Activated CD4-positive, alpha-beta T cell treated with anti-CD3 and anti-CD28 coated beads for 36 hours (primary cell): ENCODE measurements at regions of chr1 and their contacts with region 1.

Region 1: DNA sequence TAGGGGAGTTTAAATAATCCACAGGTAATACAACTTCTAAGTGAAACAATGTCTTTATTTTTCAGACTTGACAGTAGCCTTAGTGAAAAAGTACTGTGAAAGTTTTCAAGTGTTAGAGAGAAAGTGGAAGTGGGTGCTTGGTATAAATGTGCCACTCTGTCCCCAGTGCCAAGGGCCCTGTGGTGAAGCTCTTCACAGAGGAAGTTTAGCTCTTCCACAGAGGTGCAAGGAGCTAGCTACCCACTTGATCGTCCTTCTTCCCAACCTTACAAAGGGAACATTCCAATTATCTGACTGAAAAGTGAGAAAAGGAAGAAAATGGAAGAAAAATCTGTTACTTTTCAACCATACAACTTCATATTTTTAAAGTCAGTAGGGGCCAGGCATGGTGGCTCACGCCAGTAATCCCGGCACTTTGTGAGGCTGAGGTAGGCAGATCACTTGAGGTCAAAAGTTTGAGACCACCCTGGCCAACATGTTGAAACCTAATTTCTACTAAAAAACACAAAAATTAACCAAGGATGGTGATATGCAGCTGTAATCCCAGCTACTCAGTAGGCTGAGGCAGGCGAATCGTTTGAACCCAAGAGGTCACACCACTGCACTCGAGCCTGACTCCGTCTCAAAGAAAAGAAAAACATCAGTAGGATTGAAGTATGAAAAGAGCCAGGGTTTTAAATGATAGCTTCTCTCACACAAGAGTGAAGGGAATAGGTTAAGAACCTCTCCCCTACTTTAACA is 41.0 kb upstream of the PTPRC start:
- DNase-seq: no peak
- ATAC-seq: no peak
- H3K4me3 Mint-ChIP-seq: peak overlapping the region; percentile 52
- H3K27ac Mint-ChIP-seq: peak overlapping the region; percentile 87
- H3K4me1 Mint-ChIP-seq: peaks cover 80% of the 10 kb centered on the region
- H3K27me3 Mint-ChIP-seq: no peaks in the 10 kb centered on the region

Region 2: DNA sequence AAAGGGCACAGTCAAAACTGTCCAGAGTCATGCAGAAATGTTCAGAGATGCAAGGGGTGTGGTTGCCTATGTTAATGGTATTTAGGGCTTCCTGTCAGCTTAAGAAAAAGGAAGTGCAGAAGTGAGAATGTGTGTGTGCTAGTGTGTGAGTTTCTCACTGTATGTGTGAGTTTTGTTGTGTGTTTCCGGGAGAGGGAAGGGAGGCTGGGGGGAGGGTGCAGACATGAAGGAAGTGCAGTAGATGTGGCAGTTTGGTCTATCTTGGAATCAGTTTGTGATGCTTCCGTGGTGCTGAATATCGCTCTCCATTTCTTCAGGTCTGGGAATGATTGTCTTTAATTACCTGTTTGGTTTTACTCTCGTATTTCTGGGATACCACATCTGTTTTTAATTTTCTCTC is 40.9 kb before region 1 on chr1:
- CTCF ChIA-PET with region 1: interaction called, 5 read pairs
- POLR2A ChIA-PET with region 1: no interaction called
- intact Hi-C with region 1: loop called in 1 of 2 experiments (anchors 5 kb)
- DNase-seq: peak; percentile 71
- ATAC-seq: peak; percentile 94
- H3K4me3 Mint-ChIP-seq: peak overlapping the region; percentile 68
- H3K27ac Mint-ChIP-seq: peak overlapping the region; percentile 82
- H3K4me1 Mint-ChIP-seq: peaks cover 76% of the 10 kb centered on the region
- H3K27me3 Mint-ChIP-seq: no peaks in the 10 kb centered on the region

Region 3: GRCh38 chr1:198564716-198565115 is 33.1 kb before region 1 on chr1:
- CTCF ChIA-PET with region 1: no interaction called
- POLR2A ChIA-PET with region 1: no interaction called
- intact Hi-C with region 1: loop called (anchors 2 to 5 kb)
- DNase-seq: no peak
- ATAC-seq: peak; percentile 53
- H3K4me3 Mint-ChIP-seq: no peak overlapping the region
- H3K27ac Mint-ChIP-seq: no peak overlapping the region
- H3K4me1 Mint-ChIP-seq: peaks cover 46% of the 10 kb centered on the region
- H3K27me3 Mint-ChIP-seq: no peaks in the 10 kb centered on the region

Region 4: DNA sequence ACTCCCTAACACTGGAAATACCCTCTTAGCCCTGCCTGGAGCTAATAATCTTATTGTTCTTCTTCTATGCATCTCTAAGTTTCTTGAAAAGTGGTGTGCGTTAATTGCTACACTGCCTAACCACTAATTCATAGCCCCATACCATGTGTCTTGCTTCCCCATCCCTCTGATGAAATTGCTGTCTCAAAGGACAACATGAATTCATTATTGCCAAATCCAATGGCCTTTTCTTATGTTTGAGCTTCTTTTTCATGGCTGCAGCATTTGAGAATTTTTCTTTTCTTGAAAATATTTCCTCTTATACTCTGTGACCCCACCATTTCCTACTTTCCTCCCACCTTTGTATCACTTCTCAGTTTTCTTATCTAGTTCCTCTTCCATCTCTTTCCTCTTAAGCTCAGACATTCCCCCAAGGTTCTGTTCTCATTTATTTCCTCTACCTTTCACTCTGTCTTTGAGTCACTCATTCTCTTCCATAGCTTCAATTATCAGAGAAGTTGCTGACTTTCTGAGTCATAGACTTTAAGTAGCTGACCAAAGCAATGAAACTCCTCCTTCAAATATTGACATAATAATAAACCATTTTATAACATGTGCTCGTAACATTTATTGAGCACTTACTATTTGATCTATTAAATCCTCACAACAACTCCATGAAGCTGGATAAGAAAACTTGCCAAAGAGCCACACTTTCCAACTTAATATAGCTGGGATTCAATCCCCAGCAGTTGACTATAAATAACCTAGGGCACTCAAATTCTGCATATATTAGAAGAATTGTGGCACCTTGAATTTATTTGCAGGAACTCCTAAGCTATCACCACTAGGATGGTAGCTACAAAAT is 21.8 kb before region 1 on chr1:
- CTCF ChIA-PET with region 1: interaction called, 3 read pairs
- POLR2A ChIA-PET with region 1: no interaction called
- intact Hi-C with region 1: loop called in 1 of 2 experiments (anchors 2 kb)
- DNase-seq: no peak
- ATAC-seq: no peak
- H3K4me3 Mint-ChIP-seq: no peak overlapping the region
- H3K27ac Mint-ChIP-seq: no peak overlapping the region
- H3K4me1 Mint-ChIP-seq: peaks cover 14% of the 10 kb centered on the region
- H3K27me3 Mint-ChIP-seq: no peaks in the 10 kb centered on the region

Region 5: DNA sequence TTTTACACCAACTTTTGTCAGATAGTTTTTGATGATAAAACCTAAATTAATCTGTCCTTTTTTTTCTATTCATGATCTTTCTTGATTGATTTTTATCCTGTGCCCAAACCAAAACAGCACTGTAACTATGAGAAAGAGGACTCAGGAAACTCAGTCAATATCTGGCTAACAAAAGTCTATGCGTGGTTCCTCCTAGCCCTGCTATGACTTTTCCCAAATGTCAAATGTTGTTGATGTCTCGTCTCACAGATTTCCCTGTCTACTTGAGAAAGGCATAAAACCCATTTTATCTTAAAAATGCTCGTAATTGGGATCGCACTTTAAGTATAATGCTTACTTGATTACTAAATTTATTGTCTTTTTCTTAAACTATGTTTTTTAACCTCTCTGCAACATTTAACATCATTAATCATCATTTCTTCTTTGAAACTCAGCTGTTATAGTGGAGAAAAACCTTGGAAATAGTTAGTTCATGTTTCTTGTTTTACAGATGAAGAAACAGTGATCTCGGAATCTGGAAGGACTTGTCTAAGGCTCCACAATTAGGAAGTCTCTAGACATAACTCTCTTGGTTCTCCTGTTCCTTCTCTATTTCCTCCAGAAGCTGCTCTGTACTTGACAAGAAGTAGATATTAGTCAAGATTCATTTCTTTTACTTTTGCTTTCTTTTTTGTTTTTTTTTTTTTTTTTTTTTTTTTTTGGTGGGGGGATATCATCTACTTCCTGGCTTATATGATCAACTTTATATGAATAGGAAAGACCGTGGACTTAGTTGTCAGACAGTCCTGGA is 14.8 kb after region 1 on chr1:
- CTCF ChIA-PET with region 1: interaction called, 6 read pairs
- POLR2A ChIA-PET with region 1: interaction called, 4 read pairs
- intact Hi-C with region 1: loop called (anchors 1 kb)
- DNase-seq: no peak
- ATAC-seq: peak; percentile 48
- H3K4me3 Mint-ChIP-seq: peak overlapping the region; percentile 77
- H3K27ac Mint-ChIP-seq: peak overlapping the region; percentile 99
- H3K4me1 Mint-ChIP-seq: peaks cover 83% of the 10 kb centered on the region
- H3K27me3 Mint-ChIP-seq: no peaks in the 10 kb centered on the region

Region 6: GRCh38 chr1:198620951-198621824 is 23.3 kb after region 1 on chr1:
- CTCF ChIA-PET with region 1: interaction called, 5 read pairs
- POLR2A ChIA-PET with region 1: no interaction called
- intact Hi-C with region 1: loop called in 1 of 2 experiments (anchors 2 kb)
- DNase-seq: peak; percentile 84
- ATAC-seq: peak; percentile 77
- H3K4me3 Mint-ChIP-seq: peak overlapping the region; percentile 76
- H3K27ac Mint-ChIP-seq: peak overlapping the region; percentile 100
- H3K4me1 Mint-ChIP-seq: peaks cover 94% of the 10 kb centered on the region
- H3K27me3 Mint-ChIP-seq: no peaks in the 10 kb centered on the region

Region 7: GRCh38 chr1:198669023-198669698 is 71.3 kb after region 1 on chr1:
- CTCF ChIA-PET with region 1: no interaction called
- POLR2A ChIA-PET with region 1: no interaction called
- intact Hi-C with region 1: no loop called
- DNase-seq: peak; percentile 57
- ATAC-seq: peak; percentile 85
- H3K4me3 Mint-ChIP-seq: peak overlapping the region; percentile 34
- H3K27ac Mint-ChIP-seq: peak overlapping the region; percentile 77
- H3K4me1 Mint-ChIP-seq: peaks cover 90% of the 10 kb centered on the region
- H3K27me3 Mint-ChIP-seq: no peaks in the 10 kb centered on the region

Region 8: GRCh38 chr1:198776602-198777029 is 178.8 kb after region 1 on chr1:
- CTCF ChIA-PET with region 1: no interaction called
- POLR2A ChIA-PET with region 1: no interaction called
- intact Hi-C with region 1: no loop called
- DNase-seq: no peak
- ATAC-seq: peak; percentile 26
- H3K4me3 Mint-ChIP-seq: no peak overlapping the region
- H3K27ac Mint-ChIP-seq: no peak overlapping the region
- H3K4me1 Mint-ChIP-seq: peaks cover 8% of the 10 kb centered on the region
- H3K27me3 Mint-ChIP-seq: no peaks in the 10 kb centered on the region

Region 9: GRCh38 chr1:198986036-198986435 is 388.2 kb after region 1 on chr1:
- CTCF ChIA-PET with region 1: no interaction called
- POLR2A ChIA-PET with region 1: no interaction called
- intact Hi-C with region 1: no loop called
- DNase-seq: no peak
- ATAC-seq: no peak
- H3K4me3 Mint-ChIP-seq: no peak overlapping the region
- H3K27ac Mint-ChIP-seq: no peak overlapping the region
- H3K4me1 Mint-ChIP-seq: no peaks in the 10 kb centered on the region
- H3K27me3 Mint-ChIP-seq: no peaks in the 10 kb centered on the region